PC-3 (cell line): ENCODE measurements at regions of chr21 and their contacts with region 1.

Region 1: GRCh38 chr21:33127154-33127893 is 57.4 kb downstream of the OLIG1 start:
- DNase-seq: peak; percentile 82
- ATAC-seq: peak; percentile 90
- H3K4me3 ChIP-seq: peak overlapping the region; percentile 39; the same call in 1 of the 2 replicates
- H3K27ac ChIP-seq: no peak overlapping the region
- H3K4me1 ChIP-seq: no peaks in the 10 kb centered on the region
- H3K27me3 ChIP-seq: peaks cover 78% of the 10 kb centered on the region
- CTCF ChIP-seq: peak; percentile 95

Region 2: GRCh38 chr21:32834916-32835235 is 292.4 kb before region 1 on chr21:
- CTCF ChIA-PET with region 1: no interaction called
- POLR2A ChIA-PET with region 1: no interaction called
- intact Hi-C with region 1: loop called (anchors 10 kb)
- DNase-seq: no peak
- ATAC-seq: no peak
- H3K4me3 ChIP-seq: no peak overlapping the region
- H3K27ac ChIP-seq: no peak overlapping the region
- H3K4me1 ChIP-seq: no peaks in the 10 kb centered on the region; the same call in 1 of the 2 replicates
- H3K27me3 ChIP-seq: peaks cover 55% of the 10 kb centered on the region
- CTCF ChIP-seq: no peak

Region 3: GRCh38 chr21:32940079-32941014 is 187.0 kb before region 1 on chr21:
- CTCF ChIA-PET with region 1: interaction called, 6 read pairs
- POLR2A ChIA-PET with region 1: no interaction called
- intact Hi-C with region 1: loop called (anchors 10 kb)
- DNase-seq: peak; percentile 69
- ATAC-seq: peak; percentile 80; the same call in 1 of the 2 replicates
- H3K4me3 ChIP-seq: no peak overlapping the region
- H3K27ac ChIP-seq: no peak overlapping the region
- H3K4me1 ChIP-seq: no peaks in the 10 kb centered on the region
- H3K27me3 ChIP-seq: peaks cover 68% of the 10 kb centered on the region
- CTCF ChIP-seq: peak; percentile 90

Region 4: DNA sequence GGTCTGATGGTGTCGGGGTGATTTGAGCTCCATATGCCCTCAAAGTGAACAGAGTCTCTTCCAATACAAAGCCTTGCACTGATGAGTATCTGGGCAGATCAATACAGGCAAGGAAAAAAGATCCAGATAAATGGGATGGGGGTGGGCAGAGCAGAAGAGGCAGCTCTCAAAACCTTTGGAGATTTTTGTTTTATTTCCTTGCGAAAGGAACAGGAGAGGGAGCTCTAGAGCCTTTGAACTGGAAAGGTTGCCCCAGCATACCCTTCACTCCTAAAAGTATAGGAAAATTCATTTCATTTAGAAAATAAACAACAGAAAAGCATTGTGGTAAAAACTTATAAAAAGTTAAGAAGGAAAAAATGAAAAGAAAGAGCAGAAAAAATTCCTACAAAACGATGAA is 133.0 kb before region 1 on chr21:
- CTCF ChIA-PET with region 1: interaction called, 12 read pairs
- POLR2A ChIA-PET with region 1: no interaction called
- intact Hi-C with region 1: loop called (anchors 1 kb)
- DNase-seq: peak; percentile 65
- ATAC-seq: peak; percentile 77
- H3K4me3 ChIP-seq: no peak overlapping the region
- H3K27ac ChIP-seq: no peak overlapping the region
- H3K4me1 ChIP-seq: no peaks in the 10 kb centered on the region
- H3K27me3 ChIP-seq: peaks cover 53% of the 10 kb centered on the region
- CTCF ChIP-seq: peak; percentile 76